Sigmoid colon (tissue), 7 donors: ENCODE measurements at regions of chr15 and their contacts with region 1.

Region 1: GRCh38 chr15:65212097-65212496 is 824 bp upstream of the CILP start:
- DNase-seq: peak; percentile 36
- H3K4me3 ChIP-seq: no peak overlapping the region
- H3K27ac ChIP-seq: peak overlapping the region; percentile 24 to 59 (median 50)
- H3K4me1 ChIP-seq: peaks cover 0 to 32% (median 24%) of the 10 kb centered on the region in 4 donors
- H3K27me3 ChIP-seq: no peaks in the 10 kb centered on the region
- CTCF ChIP-seq: no peak
- EP300 ChIP-seq: no peak
- POLR2A ChIP-seq: no peak

Region 2: DNA sequence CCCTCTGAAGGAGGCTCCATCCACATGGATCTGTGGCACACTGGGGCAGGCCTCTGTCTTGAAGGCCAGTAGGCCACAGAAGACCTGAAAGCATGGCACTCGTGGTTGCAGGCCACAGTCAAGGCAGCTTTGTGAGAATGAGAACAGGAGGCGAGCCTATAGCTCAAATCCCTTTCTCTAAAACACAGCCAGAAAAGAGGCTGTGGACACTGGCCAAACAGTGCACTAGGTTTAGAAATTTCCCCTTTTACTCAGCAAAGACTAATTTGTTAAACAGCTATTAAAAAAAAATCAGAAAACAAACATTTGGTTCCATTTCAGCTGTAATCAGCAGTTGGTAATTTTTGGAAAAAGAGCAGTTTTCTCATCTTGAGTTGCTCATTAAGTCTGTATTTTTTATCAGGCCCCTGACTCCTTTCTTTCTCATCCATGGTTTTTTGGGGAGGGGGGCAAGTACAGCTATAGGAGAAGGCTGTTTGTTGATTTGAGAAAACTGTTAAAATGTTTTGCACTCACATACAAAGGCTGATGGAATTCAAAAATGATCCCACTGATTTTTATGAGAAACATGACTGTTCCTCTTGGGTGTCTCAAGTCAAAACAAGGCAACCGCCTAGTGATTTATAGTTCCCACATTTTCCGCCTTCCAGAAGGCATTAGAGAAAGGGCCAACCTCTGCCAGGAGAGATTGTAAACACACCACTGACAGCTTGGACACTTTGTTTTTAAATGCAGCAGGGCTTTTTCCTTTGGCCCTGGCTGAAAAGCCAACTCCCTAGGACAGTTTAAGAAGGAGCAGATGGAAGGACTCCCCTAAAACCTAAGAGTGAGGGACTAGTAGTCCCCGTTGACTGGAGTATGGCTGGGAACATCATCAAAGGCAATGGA is 46.5 kb after region 1 on chr15:
- intact Hi-C with region 1: loop called (anchors 5 kb)
- DNase-seq: peak; percentile 81
- H3K4me3 ChIP-seq: peak overlapping the region in 1 of 4 donors; percentile 11
- H3K27ac ChIP-seq: peak overlapping the region; percentile 82 to 89 (median 86)
- H3K4me1 ChIP-seq: peaks cover 0 to 82% (median 80%) of the 10 kb centered on the region in 4 donors
- H3K27me3 ChIP-seq: no peaks in the 10 kb centered on the region
- CTCF ChIP-seq: no peak
- EP300 ChIP-seq: peak in 1 of 4 donors; percentile 42
- POLR2A ChIP-seq: no peak